Activated CD8-positive, alpha-beta T cell treated with anti-CD3 and anti-CD28 coated beads for 36 hours (primary cell): ENCODE measurements at regions of chr6 and their contacts with region 1.

Region 1: GRCh38 chr6:159134701-159135364 is 34.4 kb upstream of the FNDC1 start:
- DNase-seq: peak; percentile 88
- ATAC-seq: peak; percentile 99
- H3K4me3 Mint-ChIP-seq: no peak overlapping the region
- H3K27ac Mint-ChIP-seq: no peak overlapping the region
- H3K4me1 Mint-ChIP-seq: no peaks in the 10 kb centered on the region
- H3K27me3 Mint-ChIP-seq: peaks cover 5% of the 10 kb centered on the region
- CTCF ChIP-seq: peak; percentile 98

Region 2: GRCh38 chr6:158793432-158793831 is 341.4 kb before region 1 on chr6:
- CTCF ChIA-PET with region 1: interaction called, 14 read pairs
- POLR2A ChIA-PET with region 1: no interaction called
- intact Hi-C with region 1: no loop called
- DNase-seq: peak; percentile 50
- ATAC-seq: peak; percentile 65
- H3K4me3 Mint-ChIP-seq: no peak overlapping the region
- H3K27ac Mint-ChIP-seq: peak overlapping the region; percentile 70
- H3K4me1 Mint-ChIP-seq: peaks cover 88% of the 10 kb centered on the region
- H3K27me3 Mint-ChIP-seq: no peaks in the 10 kb centered on the region
- CTCF ChIP-seq: peak; percentile 58

Region 3: DNA sequence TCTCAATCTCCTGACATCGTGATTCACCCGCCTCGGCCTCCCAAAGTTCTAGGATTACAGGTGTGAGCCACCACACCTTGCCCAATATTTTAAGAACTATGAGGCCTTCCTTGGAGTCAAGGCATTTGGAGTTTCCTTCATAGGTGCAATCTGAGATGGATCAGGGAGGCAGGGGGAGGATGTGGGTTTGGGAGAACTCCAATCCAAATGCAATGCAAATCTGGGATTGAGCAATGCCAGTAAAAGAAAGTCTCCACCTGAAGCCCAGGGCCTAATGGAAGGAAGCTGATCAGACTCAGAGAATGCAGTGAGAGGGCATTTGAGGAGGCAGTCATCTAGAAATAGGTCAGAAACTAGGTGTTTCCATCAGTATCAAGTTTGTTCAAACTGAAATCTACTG is 156.1 kb before region 1 on chr6:
- CTCF ChIA-PET with region 1: interaction called, 43 read pairs
- POLR2A ChIA-PET with region 1: interaction called, 3 read pairs
- intact Hi-C with region 1: no loop called
- DNase-seq: no peak
- ATAC-seq: no peak
- H3K4me3 Mint-ChIP-seq: no peak overlapping the region
- H3K27ac Mint-ChIP-seq: no peak overlapping the region
- H3K4me1 Mint-ChIP-seq: no peaks in the 10 kb centered on the region
- H3K27me3 Mint-ChIP-seq: no peaks in the 10 kb centered on the region
- CTCF ChIP-seq: no peak

Region 4: GRCh38 chr6:159008656-159009288 is 126.1 kb before region 1 on chr6:
- CTCF ChIA-PET with region 1: interaction called, 246 read pairs
- POLR2A ChIA-PET with region 1: no interaction called
- intact Hi-C with region 1: loop called (anchors 1 kb)
- DNase-seq: no peak
- ATAC-seq: peak; percentile 76
- H3K4me3 Mint-ChIP-seq: no peak overlapping the region
- H3K27ac Mint-ChIP-seq: peak overlapping the region; percentile 65
- H3K4me1 Mint-ChIP-seq: peaks cover 28% of the 10 kb centered on the region
- H3K27me3 Mint-ChIP-seq: no peaks in the 10 kb centered on the region
- CTCF ChIP-seq: peak; percentile 83

Region 5: DNA sequence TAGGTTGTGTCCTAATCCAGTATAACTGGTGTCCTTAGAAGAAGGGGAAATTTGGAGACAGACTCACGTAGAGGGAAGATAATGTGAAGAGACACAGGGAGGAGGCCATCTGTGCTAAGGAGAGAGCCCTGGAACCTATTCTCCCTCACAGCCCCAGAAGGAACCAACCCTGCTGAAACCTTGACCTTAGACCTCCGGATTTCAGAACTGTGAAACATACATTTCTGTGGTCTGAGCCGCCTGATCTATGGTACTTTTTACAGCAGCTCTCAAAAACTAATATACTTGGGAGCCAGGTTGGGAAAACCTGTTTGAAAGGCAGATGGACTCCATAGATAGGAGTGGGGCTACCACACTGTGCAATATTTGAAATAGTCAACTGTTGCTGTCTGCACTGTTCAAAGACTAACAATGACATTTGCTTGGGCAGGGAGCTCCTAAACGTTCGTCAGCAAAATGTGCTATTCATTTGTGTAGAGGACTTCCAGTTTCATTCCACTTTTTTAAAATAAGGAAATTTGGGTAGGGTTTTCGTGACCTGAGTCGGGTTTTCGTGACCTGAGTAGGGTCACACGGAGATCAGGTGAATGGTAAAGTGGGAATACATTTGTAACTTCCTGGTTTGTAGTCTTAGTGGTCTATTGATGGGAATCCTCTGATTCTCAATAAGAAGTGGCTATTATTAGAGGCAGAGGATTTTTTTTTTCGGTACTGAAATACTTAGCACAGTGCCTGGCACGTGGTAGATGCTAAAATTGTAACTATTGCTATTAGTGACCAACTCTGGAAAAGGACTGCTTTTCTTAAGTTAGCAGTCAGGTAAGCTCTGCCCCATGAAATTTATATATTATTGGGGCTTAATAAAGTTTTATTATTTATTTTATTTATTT is 101.4 kb before region 1 on chr6:
- CTCF ChIA-PET with region 1: interaction called, 17 read pairs
- POLR2A ChIA-PET with region 1: no interaction called
- intact Hi-C with region 1: no loop called
- DNase-seq: no peak
- ATAC-seq: no peak
- H3K4me3 Mint-ChIP-seq: no peak overlapping the region
- H3K27ac Mint-ChIP-seq: peak overlapping the region; percentile 52
- H3K4me1 Mint-ChIP-seq: peaks cover 36% of the 10 kb centered on the region
- H3K27me3 Mint-ChIP-seq: no peaks in the 10 kb centered on the region
- CTCF ChIP-seq: no peak

Region 6: DNA sequence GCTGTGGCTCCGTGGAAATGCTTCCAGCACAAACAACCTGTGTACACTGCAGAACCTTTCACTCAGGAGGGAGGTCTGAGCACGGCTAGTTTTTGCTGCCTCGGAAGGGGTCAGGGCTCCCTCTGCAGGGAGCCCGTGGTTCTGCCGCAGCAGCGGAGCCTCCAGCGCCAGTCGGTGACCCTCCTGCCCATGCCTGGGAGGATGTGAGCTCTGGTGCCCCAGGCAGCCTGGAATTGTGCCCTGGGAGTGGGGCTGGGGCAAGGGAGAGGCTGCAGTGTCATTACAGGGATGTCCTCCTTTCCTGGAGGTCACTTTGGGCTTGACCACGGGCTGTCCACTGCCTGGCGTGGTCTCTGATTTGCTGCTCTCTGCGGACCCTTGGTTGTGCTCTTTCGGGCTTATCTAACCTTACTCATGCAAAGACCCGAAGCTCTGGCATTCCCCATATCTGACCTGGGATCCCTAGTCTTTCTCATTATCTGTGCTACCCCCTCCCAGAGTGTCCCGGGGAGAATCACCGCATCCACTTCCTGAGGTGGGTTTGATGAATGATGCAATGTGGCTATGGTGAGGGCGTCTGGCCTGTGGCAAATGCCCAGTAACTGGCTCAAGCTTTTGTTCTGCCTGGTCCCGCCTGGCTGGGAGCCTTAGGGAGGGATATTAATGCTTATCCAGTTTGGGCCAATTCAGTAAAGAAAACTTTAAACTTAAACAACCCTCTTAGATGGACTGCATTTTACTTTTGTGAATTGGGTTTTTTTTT is 30.5 kb before region 1 on chr6:
- CTCF ChIA-PET with region 1: interaction called, 71 read pairs
- POLR2A ChIA-PET with region 1: interaction called, 5 read pairs
- intact Hi-C with region 1: no loop called
- DNase-seq: peak; percentile 82
- ATAC-seq: peak; percentile 62
- H3K4me3 Mint-ChIP-seq: peak overlapping the region; percentile 68
- H3K27ac Mint-ChIP-seq: peak overlapping the region; percentile 91
- H3K4me1 Mint-ChIP-seq: peaks cover 87% of the 10 kb centered on the region
- H3K27me3 Mint-ChIP-seq: no peaks in the 10 kb centered on the region
- CTCF ChIP-seq: peak; percentile 97

Region 7: DNA sequence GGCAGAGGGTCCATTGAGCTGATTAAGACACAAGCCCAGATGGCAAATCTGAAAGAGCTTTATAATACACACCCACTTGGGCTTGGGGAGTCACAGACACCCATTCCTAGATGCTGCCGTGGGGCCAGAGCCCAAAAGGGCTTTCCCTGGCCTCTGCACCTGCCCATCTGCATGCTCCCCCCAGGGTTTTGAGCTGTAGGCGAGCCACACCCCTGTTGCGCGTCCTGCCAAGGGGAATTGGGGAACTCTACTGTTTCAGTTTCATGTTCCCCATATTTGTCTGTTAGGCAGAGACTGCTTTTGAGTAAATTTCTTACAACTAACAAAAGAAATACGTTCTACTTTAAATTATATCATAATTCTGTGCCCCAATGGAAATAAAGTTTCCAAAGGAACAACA is 18.5 kb before region 1 on chr6:
- CTCF ChIA-PET with region 1: interaction called, 70 read pairs
- POLR2A ChIA-PET with region 1: interaction called, 3 read pairs
- intact Hi-C with region 1: no loop called
- DNase-seq: no peak
- ATAC-seq: no peak
- H3K4me3 Mint-ChIP-seq: no peak overlapping the region
- H3K27ac Mint-ChIP-seq: no peak overlapping the region
- H3K4me1 Mint-ChIP-seq: no peaks in the 10 kb centered on the region
- H3K27me3 Mint-ChIP-seq: no peaks in the 10 kb centered on the region
- CTCF ChIP-seq: no peak

Region 8: GRCh38 chr6:159217595-159218275 is 82.9 kb after region 1 on chr6:
- CTCF ChIA-PET with region 1: no interaction called
- POLR2A ChIA-PET with region 1: no interaction called
- intact Hi-C with region 1: no loop called
- DNase-seq: peak; percentile 42
- ATAC-seq: no peak
- H3K4me3 Mint-ChIP-seq: no peak overlapping the region
- H3K27ac Mint-ChIP-seq: no peak overlapping the region
- H3K4me1 Mint-ChIP-seq: no peaks in the 10 kb centered on the region
- H3K27me3 Mint-ChIP-seq: peaks cover 16% of the 10 kb centered on the region
- CTCF ChIP-seq: no peak